Activated T-helper 1 cell treated with anti-CD3 and anti-CD28 coated beads, Interleukin-12 subunit alpha, Interleukin-12 subunit beta, Interleukin-2, Interleukin-4 antibody, amounts not matched to agents 30 ng/mL and 10 ng/mL and 1 ng/mL, durations not matched to agents 14 hours and 24 hours and 36 hours (primary cell): ENCODE measurements at regions of chr14 and their contacts with region 1.

Region 1: DNA sequence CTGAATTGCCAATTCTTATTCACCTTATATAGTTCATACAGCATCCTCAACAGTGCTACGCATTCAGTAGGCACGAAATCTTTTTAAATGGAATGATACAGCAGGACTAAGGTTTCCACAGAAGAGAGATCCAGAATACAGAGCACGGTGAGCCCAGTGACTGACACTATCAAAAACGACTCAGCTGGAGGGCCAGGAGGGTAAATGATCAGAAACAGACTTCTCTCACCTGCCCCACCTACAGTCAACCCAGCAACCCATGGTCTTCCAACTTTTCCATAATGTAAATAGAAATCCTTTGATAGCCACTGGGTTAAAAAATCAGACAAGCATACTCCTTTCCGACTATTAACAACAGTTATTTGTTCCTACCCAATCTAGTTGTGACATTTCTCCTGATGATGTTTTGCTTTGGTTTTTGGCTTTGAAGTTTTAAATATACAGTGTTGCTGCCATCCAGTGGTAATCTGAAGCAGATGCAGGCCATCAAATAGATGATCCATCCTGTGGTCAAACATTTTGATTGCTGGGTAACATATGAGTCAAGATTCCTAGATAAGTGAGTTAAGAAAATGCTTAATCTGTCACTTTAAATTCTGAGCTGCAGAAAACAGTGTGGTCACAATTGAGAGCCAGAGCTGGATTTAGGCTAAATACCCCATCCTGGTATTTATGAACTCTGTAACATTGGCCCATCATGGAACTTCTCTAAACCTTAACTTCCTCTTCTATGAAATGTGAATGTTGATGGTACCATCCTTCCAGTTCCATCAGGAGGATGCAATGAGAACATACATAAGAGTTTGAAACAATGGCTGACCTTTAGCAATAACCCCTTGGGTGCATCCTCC is 42.0 kb downstream of the GPHB5 start:
- DNase-seq: no peak
- H3K4me3 Mint-ChIP-seq: no peak overlapping the region
- H3K27ac Mint-ChIP-seq: no peak overlapping the region
- H3K4me1 Mint-ChIP-seq: no peaks in the 10 kb centered on the region
- H3K27me3 Mint-ChIP-seq: peaks cover 4% of the 10 kb centered on the region

Region 2: DNA sequence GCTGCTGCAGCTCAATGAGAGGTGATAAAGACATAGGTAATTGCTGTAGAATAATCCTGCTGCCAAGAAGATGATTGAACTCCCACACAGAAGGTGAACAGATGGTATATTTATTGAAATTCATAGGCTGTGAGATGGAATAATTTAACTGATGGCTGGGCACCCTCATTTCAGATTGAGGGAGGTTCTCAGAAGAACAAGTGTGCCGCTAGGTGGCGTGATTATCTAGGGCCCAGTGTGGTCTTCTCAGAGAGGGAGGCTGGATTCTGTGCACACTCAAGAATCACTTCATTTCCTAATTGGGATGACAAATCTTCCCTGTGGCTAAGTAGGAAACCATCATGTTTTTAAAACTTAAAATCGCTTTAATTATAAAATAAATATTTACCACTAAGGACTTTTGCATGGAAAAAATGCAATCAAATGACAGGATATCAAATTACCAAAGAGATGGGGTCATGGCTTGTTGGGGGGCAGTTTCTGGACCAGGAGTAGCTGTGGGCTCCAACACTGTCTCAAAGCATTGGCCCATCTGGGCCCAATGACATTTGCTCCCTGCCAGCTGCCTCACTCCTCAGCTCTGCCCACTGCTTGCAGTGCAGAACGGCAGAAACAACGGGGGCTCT is 1382.2 kb before region 1 on chr14:
- intact Hi-C with region 1: loop called (anchors 2 kb)
- DNase-seq: peak; percentile 27
- H3K4me3 Mint-ChIP-seq: no peak overlapping the region
- H3K27ac Mint-ChIP-seq: no peak overlapping the region
- H3K4me1 Mint-ChIP-seq: peaks cover 12% of the 10 kb centered on the region
- H3K27me3 Mint-ChIP-seq: peaks cover 14% of the 10 kb centered on the region

Region 3: GRCh38 chr14:62162998-62163589 is 1113.6 kb before region 1 on chr14:
- intact Hi-C with region 1: loop called (anchors 1 kb)
- DNase-seq: peak; percentile 3
- H3K4me3 Mint-ChIP-seq: no peak overlapping the region
- H3K27ac Mint-ChIP-seq: no peak overlapping the region
- H3K4me1 Mint-ChIP-seq: no peaks in the 10 kb centered on the region
- H3K27me3 Mint-ChIP-seq: peaks cover 5% of the 10 kb centered on the region

Region 4: GRCh38 chr14:62179367-62180018 is 1097.2 kb before region 1 on chr14:
- intact Hi-C with region 1: loop called (anchors 1 kb)
- DNase-seq: peak; percentile 2
- H3K4me3 Mint-ChIP-seq: no peak overlapping the region
- H3K27ac Mint-ChIP-seq: no peak overlapping the region
- H3K4me1 Mint-ChIP-seq: no peaks in the 10 kb centered on the region
- H3K27me3 Mint-ChIP-seq: peaks cover 4% of the 10 kb centered on the region

Region 5: DNA sequence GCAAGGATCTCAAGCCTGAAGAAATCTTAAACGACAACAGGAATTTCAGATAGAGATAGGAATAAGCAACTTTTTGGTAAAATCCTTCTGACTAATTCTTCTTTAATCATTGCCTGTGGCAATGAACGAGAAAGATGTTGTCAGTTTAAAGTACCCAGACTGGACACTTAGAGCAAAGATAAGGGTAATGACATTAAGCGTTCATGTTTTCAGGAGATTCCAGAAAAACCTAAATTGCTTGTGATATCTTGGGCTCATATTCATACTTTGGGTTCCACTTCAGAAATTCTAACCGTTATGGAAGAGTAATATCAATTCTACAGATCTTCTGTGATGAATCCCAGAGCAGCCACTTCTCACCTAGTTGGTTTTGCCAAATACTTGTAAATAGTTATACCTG is 146.2 kb before region 1 on chr14:
- intact Hi-C with region 1: no loop called
- DNase-seq: no peak
- H3K4me3 Mint-ChIP-seq: no peak overlapping the region
- H3K27ac Mint-ChIP-seq: no peak overlapping the region
- H3K4me1 Mint-ChIP-seq: no peaks in the 10 kb centered on the region
- H3K27me3 Mint-ChIP-seq: no peaks in the 10 kb centered on the region